Posterior vena cava (tissue), 2 donors: ENCODE measurements at regions of chr7 and their contacts with region 1.

Region 1: DNA sequence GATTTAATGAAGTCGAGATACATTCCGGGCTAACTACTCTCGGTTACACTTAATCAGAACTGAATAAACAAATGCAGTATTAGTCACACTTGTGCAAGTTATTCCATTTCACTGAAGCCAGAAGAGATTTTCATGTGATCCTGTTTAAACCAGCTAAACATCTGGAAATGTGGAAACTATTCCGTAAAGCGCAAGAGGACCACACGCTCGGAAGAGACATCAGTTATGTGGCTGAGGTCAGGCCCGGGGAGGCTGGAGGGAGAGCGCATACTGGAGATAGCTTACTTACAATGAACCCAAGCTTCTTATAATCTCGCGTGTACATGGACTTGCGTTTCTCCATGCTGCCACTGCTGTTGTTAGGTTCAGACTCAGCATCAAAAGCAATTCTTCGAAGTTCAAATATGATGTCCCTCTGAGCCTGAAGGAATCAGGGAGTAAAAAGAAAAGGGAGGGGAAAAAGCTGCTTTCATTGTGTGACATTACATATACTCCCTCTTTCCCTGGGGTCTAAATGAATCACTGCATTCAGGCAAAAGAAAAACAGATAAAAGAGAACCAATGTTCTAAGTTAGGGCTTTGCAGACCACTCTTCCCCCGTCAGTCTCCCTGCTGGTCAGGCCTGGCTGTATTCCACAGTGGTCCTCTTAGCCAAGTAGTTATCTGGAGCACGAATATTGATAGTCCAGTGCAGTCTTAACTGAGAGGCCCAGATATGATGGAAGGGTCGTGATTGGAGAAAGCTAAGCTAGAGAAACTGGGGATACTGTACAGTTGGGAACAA is 237.4 kb downstream of the ELMO1 start:
- DNase-seq: peak; percentile 83

Region 2: GRCh38 chr7:36852017-36852416 is 359.3 kb before region 1 on chr7:
- intact Hi-C with region 1: no loop called
- DNase-seq: no peak

Region 3: DNA sequence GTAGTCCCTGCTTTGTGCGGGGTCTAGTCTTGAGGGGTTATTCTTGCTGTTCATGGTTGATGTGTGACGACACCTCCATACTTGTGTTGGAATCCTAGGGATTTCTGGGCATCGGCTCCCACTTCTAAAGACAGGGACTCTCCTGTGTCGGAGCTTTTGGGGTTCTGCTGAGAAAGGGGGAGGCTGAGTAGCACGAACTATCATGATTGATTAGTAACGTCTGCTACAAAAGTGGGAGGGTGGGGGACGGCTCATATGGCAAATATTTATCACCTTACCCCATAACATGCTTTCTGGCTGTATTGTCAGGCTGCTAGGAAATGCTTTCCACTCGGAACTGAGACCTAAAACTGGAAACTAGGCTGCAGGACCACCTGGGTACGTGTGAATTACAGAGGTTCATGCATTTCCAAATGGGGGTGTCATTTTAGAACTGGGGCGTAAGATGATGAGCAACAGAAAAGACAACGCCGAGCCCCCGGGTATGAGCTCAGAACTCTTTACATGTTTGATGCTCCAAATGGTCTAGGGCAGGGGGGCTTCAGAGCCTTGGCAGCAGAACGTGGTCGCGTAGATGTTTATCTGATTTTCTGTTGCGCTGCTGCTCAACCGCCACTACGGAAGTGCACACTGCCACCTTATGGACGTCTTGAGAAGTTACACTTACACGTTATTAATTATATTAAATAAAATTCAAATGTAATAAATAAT is 622.0 kb after region 1 on chr7:
- intact Hi-C with region 1: loop called (anchors 10 kb)
- DNase-seq: peak; percentile 81